ENCODE measurements at regions of chr13 and their contacts with region 1.

Region 1: DNA sequence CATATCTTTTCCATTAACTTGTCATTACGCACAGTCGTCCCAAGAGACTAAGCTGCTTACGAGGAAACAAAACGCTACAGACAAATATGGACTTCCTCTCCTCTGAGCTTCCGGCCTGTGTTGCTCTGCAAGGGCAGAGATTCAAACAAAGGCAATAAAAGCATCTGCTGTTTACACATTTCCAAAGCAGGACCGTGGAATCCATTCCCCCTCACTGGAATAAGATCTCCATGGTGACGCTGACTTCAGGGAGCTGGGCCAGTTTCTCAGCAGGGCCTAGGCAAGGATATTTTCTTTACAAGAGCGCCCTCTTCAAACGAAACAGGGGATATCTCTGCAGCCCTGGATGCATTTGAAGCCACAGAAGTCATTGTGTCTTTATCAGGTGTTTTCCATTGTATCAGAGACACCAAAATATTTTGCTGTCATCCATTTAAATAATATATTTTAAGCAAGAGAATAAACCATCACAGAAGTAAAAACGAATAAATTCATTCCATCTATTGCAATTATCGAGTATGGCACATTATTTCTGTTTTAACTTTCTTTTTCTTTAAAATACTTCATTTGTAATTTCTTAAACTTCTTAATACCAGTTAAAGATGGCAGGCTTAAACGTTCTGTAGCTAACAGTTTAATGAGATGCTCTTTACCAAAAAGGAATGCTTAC is 177.5 kb downstream of the DCLK1 start:
- DNase-seq: peak in 1 of 2 donors; percentile 96
- H3K4me3 ChIP-seq: no peak overlapping the region
- H3K27ac ChIP-seq: no peak overlapping the region
- H3K4me1 ChIP-seq: peaks cover 7% of the 10 kb centered on the region
- H3K27me3 ChIP-seq: no peaks in the 10 kb centered on the region
- CTCF ChIP-seq: peak in 2 of 3 experiments; percentile 13 to 57
- POLR2A ChIP-seq: no peak

Region 2: GRCh38 chr13:35720690-35721554 is 232.8 kb before region 1 on chr13:
- intact Hi-C with region 1: loop called (anchors 10 kb)
- DNase-seq: no peak
- H3K4me3 ChIP-seq: no peak overlapping the region
- H3K27ac ChIP-seq: peak overlapping the region; percentile 63
- H3K4me1 ChIP-seq: peaks cover 19% of the 10 kb centered on the region
- H3K27me3 ChIP-seq: no peaks in the 10 kb centered on the region
- CTCF ChIP-seq: peak; percentile 63 to 76 (median 75)
- POLR2A ChIP-seq: no peak

Region 3: GRCh38 chr13:35818633-35819067 is 135.0 kb before region 1 on chr13:
- intact Hi-C with region 1: loop called (anchors 10 kb)
- DNase-seq: no peak
- H3K4me3 ChIP-seq: no peak overlapping the region
- H3K27ac ChIP-seq: peak overlapping the region; percentile 30
- H3K4me1 ChIP-seq: no peaks in the 10 kb centered on the region
- H3K27me3 ChIP-seq: no peaks in the 10 kb centered on the region
- CTCF ChIP-seq: peak in 2 of 3 experiments; percentile 52 to 75
- POLR2A ChIP-seq: no peak

Region 4: GRCh38 chr13:35936246-35936978 is 17.3 kb before region 1 on chr13:
- intact Hi-C with region 1: no loop called
- DNase-seq: peak in 1 of 2 donors; percentile 79
- H3K4me3 ChIP-seq: no peak overlapping the region
- H3K27ac ChIP-seq: peak overlapping the region; percentile 63
- H3K4me1 ChIP-seq: peaks cover 14% of the 10 kb centered on the region
- H3K27me3 ChIP-seq: no peaks in the 10 kb centered on the region
- CTCF ChIP-seq: no peak
- POLR2A ChIP-seq: no peak

Region 5: DNA sequence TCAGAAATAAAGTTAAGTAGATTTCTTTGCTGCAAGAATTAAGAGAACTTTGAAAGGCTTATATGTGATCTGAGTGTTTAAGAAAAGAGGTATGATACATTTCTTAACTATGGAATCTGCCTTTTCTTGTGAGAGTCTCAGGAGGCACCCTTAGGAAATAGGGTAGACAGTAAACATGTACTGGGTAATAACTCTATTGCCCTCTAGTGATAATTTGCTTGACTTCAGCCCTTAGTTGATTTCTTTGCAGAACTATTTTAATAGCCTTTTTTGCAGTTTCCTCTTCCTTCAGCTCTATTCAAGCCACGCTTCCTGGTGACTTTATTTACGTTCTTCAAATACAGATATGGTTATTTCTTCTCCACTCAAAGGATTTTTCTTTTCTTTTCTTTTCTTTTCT is 441.6 kb after region 1 on chr13:
- intact Hi-C with region 1: no loop called
- DNase-seq: no peak
- H3K4me3 ChIP-seq: no peak overlapping the region
- H3K27ac ChIP-seq: no peak overlapping the region
- H3K4me1 ChIP-seq: no peaks in the 10 kb centered on the region
- H3K27me3 ChIP-seq: no peaks in the 10 kb centered on the region
- CTCF ChIP-seq: peak in 1 of 3 experiments; percentile 53
- POLR2A ChIP-seq: no peak

Measured in vagina (tissue), 2 donors.